ENCODE measurements at regions of chr15 and their contacts with region 1.

Region 1: GRCh38 chr15:73346735-73347312 is 21.9 kb downstream of the HCN4 start:
- DNase-seq: no peak

Region 2: DNA sequence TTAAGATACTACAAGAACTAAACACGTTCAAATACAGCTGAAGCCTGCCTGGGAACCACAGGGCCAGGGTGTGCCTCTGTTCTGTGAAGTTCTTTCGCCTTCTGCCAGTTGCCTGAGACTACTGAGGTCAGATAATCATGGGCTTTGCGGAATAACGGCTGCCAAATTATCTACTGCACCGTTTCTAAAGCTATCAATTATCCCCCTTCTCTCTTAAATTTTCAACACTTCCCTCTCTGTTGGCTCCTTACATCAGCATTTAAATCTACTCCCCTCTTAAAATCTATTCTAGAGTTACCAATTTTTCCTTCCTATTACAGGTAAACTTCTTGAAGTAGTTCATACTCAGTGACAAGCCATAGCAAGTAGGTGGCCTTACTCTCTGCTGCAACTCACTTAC is 300.8 kb before region 1 on chr15:
- intact Hi-C with region 1: no loop called
- DNase-seq: no peak

Region 3: DNA sequence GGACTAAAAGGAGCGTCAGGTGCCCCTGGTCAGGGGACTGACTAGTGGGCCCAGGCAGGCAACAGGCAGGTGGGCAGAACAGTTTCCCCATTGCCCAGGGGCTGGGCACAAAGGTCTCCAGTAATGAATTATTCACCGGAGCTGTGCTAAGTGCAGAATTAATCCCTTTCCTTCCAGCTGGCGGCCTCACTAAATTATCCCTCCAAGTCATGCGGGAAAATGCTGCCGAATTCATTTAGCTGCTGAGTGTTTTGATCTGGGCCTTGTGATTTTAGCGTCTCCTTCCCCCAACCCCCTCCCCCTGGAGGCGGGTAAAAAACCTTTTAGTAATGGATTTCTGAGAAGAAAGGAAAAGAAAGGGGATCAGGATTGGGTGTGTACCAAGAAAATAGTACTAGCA is 936.5 kb after region 1 on chr15:
- intact Hi-C with region 1: loop called in 1 of 2 experiments (anchors 5 kb)
- DNase-seq: no peak

Measured in posterior vena cava (tissue), 2 donors.